Activated T-helper 1 cell treated with anti-CD3 and anti-CD28 coated beads, Interleukin-12 subunit alpha, Interleukin-12 subunit beta, Interleukin-2, Interleukin-4 antibody, amounts not matched to agents 30 ng/mL and 10 ng/mL and 1 ng/mL, durations not matched to agents 14 hours and 24 hours and 36 hours (primary cell): ENCODE measurements at regions of chr15 and their contacts with region 1.

Region 1: DNA sequence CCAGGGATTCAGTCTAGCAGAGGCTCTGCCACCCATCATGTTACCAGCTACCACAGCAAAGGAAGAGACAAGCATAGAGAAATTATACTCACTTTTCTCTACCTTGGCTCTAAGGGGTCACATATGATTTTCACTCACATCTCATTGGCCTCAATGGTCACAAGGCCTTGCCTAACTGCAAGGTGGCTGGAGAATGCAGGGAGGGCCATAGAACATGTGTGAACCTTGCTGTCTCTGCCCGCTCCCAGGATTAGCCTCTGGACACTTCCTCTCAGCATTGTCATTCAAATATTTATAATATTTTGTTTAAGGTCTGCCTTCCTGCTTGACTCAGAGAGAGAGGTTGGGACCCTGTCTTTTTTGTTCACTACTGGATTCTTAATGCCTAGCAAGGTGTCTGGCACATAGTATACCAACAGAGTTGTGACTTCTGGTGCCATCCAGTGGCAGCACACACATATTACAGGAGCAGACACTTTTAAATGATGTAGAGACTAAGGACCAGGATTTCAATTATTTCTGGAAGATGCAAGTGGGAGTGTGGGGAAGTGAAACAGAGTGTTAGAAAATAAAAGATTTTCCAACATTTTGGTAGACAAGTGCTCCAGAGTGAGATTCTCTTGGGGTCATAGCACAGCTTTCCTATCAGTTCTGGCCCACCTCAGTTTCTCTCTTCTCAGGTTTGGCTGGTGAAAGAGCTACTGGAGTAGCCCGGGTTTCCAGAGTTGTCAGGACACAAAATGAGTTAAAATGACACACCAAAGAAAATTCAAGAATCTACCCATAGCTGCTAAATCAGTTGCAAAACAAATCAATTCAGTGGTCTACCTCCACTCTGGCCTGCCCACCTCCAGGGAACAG is 119.0 kb upstream of the RASGRP1 start:
- DNase-seq: peak; percentile 57
- H3K4me3 Mint-ChIP-seq: peak overlapping the region; percentile 65
- H3K27ac Mint-ChIP-seq: peak overlapping the region; percentile 95
- H3K4me1 Mint-ChIP-seq: peaks cover 80% of the 10 kb centered on the region
- H3K27me3 Mint-ChIP-seq: no peaks in the 10 kb centered on the region

Region 2: DNA sequence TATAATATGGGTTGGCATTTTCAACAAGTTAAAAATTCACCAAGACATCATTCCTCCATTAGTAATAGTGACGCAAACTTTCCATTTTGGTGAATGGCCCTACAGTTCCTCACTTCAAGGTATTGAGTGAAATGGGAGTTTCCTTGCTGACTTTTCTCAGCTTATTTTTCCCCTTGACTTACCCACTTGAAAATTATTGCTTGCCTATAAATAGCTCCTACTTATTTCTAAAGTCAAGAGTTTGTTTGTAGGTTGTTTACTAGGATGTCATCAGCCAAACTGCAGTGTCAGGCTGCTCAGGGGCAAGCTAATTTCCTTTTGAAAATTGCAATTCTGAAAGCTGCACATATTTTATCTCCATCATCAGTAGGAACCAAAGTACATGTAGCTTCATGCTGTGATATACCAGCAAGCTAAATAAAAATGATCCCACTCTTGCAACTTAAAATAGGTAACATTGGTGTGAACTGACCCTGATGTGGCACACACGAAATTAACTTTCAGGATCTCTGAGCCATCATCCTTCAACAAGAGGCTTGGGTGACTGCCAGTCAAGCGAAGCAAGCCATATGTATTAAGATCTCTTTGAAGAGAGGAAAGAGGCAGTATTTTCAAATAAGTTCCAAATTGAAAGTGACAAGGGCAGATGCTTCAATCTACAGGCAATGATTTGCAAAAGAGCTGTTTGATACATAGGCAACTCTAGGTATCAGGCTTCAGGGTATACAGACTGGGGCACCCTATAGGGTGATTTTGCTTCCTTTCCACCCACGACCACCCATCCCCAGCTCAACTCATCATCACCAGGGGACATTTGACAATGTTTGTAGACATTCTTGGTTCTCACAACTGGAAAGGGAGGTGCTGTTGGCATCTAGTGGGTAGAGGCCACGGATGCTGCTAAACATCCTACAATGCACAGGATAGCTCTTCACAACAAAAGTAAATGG is 52.2 kb before region 1 on chr15:
- intact Hi-C with region 1: loop called (anchors 1 kb)
- DNase-seq: no peak
- H3K4me3 Mint-ChIP-seq: peak overlapping the region; percentile 62
- H3K27ac Mint-ChIP-seq: peak overlapping the region; percentile 91
- H3K4me1 Mint-ChIP-seq: peaks cover 63% of the 10 kb centered on the region
- H3K27me3 Mint-ChIP-seq: no peaks in the 10 kb centered on the region

Region 3: DNA sequence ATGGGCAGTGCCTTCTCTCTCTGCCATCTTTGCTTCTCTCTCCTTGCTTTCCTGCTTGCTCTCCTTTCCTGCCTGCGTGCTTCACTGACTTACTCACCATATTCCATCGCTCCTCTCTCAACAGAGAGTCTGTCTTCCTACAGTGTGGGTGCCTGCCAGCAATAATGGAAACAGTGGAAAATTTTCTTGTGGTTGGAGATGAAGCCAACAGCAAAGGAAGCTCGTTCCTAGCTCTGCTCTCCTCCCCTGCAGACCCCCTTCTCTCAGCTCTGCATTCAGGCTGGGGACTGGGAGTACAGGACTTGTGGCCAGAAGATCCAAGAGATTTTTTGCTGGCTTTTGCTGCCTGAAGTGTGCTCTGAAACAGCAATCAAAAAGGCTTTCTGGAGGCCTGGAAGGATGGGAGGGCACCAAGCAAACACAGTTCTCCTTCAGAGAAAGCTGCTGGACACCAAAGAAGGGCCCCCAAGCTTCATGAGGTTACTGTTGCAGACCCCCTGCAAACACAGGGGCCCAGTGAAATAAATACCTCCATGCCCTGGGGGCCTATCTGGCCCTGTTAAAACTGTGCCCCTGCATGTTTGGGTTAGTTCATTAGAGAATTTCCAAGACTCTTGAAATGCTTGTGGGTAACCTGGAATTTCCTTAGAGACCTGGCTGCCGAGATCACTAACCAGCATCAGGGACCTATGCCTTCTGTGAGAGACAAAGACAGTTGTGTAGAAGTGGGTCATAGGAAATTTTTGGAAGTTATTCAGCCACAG is 30.9 kb after region 1 on chr15:
- intact Hi-C with region 1: no loop called
- DNase-seq: no peak
- H3K4me3 Mint-ChIP-seq: no peak overlapping the region
- H3K27ac Mint-ChIP-seq: no peak overlapping the region
- H3K4me1 Mint-ChIP-seq: no peaks in the 10 kb centered on the region
- H3K27me3 Mint-ChIP-seq: peaks cover 3% of the 10 kb centered on the region

Region 4: DNA sequence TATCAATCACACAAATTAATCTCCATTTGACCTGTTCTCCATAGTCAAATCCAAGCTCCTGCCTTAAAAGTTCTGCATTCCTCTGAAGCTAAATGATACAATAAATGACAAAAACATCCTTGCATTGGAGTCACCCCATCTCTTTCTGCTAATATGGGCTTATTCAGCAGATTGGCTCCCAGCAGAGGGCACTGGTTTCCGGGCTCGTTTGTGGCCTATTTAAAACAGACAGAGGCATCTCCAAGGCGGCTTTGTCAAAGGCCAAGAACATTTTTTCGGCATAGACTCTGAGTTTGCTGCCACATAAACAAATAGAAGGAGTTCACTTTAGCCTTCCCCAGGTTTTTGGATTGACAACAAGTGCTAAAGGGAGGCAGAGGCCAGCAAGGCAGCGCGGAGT is 85.4 kb after region 1 on chr15:
- intact Hi-C with region 1: no loop called
- DNase-seq: no peak
- H3K4me3 Mint-ChIP-seq: no peak overlapping the region
- H3K27ac Mint-ChIP-seq: no peak overlapping the region
- H3K4me1 Mint-ChIP-seq: no peaks in the 10 kb centered on the region
- H3K27me3 Mint-ChIP-seq: peaks cover 2% of the 10 kb centered on the region